Dendritic cell treated with granulocyte-macrophage colony-stimulating factor and Interleukin-4, amounts not matched to agents 40 ng/mL and 50 ng/mL, for 4 days (primary cell): ENCODE measurements at regions of chr11 and their contacts with region 1.

Region 1: DNA sequence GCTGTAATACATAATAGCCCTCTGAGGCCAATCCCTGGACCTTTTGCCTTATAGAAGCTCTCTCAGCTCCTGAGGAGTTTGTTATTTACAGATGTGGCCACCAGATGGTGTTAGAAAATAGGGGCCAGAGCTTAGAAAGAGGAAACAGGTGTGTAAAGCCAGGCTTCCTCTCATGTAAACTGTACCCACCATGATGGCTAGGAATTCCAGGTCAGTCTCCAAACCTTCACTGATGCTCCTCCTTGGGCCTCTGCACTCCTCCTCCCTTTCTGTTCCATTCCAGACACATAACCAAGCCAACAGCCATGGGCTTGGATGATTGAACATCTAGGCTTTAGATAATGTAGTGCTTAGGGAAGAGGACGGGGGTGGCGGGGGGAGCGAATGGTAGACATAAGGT is 39.7 kb downstream of the USP35 start:
- H3K4me3 Mint-ChIP-seq: no peak overlapping the region
- H3K27ac Mint-ChIP-seq: no peak overlapping the region
- H3K4me1 Mint-ChIP-seq: peaks cover 27% of the 10 kb centered on the region
- H3K27me3 Mint-ChIP-seq: no peaks in the 10 kb centered on the region

Region 2: DNA sequence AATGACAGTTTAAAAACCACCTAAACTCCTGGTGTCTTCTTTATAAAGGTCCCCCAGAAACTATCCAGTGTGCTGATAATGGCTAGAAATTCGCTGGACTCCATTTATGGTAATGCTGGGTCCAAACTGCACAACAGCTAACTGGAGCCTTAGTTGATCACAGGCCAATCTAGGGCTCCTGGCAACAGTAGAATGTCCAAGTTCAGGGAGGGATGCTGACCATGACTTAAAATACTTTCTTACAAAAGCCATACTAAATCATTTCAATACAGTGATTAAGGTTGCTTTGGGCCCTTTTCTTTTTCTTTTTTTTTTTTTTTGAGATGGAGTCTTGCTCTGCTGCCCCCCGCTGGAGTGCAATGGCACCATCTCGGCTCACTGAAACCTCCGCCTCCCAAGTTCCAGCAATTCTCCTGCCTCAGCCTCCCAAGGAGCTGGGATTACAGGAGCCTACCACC is 203.6 kb after region 1 on chr11:
- intact Hi-C with region 1: loop called (anchors 5 kb)
- H3K4me3 Mint-ChIP-seq: no peak overlapping the region
- H3K27ac Mint-ChIP-seq: no peak overlapping the region
- H3K4me1 Mint-ChIP-seq: peaks cover 25% of the 10 kb centered on the region
- H3K27me3 Mint-ChIP-seq: no peaks in the 10 kb centered on the region

Region 3: GRCh38 chr11:78564490-78565467 is 336.3 kb after region 1 on chr11:
- intact Hi-C with region 1: loop called (anchors 2 kb)
- H3K4me3 Mint-ChIP-seq: no peak overlapping the region
- H3K27ac Mint-ChIP-seq: no peak overlapping the region
- H3K4me1 Mint-ChIP-seq: peaks cover 32% of the 10 kb centered on the region
- H3K27me3 Mint-ChIP-seq: no peaks in the 10 kb centered on the region